Mammary epithelial cell (primary cell): ENCODE measurements at regions of chr19 and their contacts with region 1.

Region 1: DNA sequence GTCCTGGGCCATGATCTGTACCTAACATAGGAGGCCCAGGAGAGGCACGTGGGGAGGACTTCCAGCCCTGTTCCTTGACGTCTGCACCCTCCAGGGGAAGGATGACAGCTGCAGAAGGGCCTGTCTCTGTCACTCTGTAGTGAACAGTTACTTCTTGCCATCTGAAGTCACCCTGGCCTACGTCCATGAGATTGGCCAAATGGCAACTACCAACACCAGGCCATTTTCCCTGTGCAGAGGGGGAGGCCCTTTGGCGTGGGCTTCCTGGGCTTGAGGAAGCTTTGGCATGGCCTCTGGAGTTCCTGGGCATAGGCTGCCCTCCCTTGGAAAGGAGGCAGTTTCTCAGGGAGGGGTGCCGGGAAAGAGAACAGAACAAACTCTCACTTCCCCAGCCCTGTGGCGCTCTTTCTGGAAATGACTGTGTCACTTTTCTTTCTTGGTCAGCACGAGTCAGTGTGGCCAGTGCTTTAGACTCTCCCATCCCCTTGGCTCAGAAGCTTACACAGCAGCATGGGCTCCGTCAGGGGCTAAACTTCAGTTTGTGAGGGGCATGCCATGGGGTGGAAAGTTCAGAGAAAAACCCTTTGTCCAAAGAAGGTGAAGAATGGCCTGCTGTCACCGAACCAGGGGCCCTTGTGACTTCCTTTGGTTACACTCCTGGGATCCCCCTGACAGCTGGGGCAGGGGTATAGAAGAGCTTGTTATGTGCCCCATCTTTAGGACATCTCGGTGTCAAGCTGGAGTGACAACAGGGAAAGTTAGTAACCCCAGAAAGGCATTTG is 5.3 kb downstream of the CARM1 start:
- DNase-seq: no peak
- H3K4me3 ChIP-seq: no peak overlapping the region
- H3K27ac ChIP-seq: no peak overlapping the region
- H3K4me1 ChIP-seq: peaks cover 8% of the 10 kb centered on the region
- H3K27me3 ChIP-seq: no peaks in the 10 kb centered on the region
- CTCF ChIP-seq: no peak

Region 2: DNA sequence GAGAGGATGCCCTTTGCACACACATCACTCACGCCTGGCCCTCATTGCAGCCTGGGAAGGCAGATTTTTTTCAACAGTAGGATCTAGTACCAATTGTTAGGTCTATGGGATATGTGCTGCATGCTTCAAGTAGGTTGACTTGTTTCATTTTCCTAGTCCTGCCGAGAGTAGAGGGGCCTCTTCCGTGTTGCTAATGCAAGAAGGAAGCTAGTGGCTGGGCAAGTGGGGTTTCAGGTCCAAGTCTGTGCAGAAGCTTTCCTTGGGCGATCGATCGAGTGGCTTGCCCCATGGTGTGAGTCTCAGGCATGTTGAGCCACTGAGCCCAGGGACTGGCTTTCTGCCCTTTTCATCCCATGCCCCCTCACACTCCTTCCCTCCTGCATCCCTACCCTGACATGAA is 208.8 kb before region 1 on chr19:
- CTCF ChIA-PET with region 1: no interaction called
- dilution Hi-C with region 1: loop called (anchors 5 kb)
- in situ Hi-C with region 1: no loop called
- intact Hi-C with region 1: no loop called
- DNase-seq: no peak
- H3K4me3 ChIP-seq: no peak overlapping the region
- H3K27ac ChIP-seq: no peak overlapping the region
- H3K4me1 ChIP-seq: peaks cover 1% of the 10 kb centered on the region
- H3K27me3 ChIP-seq: no peaks in the 10 kb centered on the region
- CTCF ChIP-seq: no peak

Region 3: DNA sequence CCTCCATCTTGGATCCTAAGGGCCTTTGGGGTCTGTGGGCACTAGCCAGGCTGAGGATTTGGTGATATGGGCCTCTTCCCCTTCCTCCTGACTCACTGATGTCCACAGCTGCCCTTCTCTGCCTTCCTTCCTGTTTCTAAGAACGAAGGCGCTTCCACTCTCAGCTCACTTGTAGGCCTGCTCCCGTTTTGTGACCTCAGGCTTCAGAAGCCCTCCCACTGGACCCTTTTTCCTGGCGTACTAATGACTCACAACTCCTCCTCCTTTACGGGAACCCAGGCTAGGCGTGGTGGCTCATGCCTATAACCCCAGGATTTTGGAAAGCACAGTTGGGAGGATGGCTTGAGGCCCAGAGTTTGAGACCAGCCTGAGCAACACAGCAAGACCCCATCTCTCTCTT is 96.3 kb before region 1 on chr19:
- CTCF ChIA-PET with region 1: no interaction called
- dilution Hi-C with region 1: no loop called
- in situ Hi-C with region 1: no loop called
- intact Hi-C with region 1: no loop called
- DNase-seq: no peak
- H3K4me3 ChIP-seq: no peak overlapping the region
- H3K27ac ChIP-seq: no peak overlapping the region
- H3K4me1 ChIP-seq: no peaks in the 10 kb centered on the region
- H3K27me3 ChIP-seq: no peaks in the 10 kb centered on the region
- CTCF ChIP-seq: no peak